ENCODE measurements at regions of chr15 and their contacts with region 1.

Region 1: DNA sequence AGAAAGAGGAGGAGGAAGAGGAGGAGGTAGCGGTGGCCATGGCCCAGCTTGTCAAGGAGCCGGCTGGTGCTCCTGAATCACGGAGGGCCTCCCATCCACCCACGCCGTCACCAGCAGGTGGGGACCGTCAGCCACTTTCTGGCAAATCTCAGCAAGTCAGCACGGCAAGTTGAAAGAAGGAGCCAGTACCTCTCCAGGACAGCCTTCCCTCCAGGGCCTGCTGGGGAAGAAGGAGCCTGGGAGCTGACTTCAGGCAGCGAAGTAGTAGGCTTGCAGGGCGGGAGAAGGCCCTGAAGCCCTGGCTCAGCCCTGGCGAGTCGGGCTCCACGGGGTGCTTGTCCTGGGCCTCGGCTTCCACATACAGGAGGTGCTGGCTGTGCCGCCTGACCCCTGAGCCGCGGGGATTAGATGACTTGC is 99.2 kb upstream of the TRPM1 start:
- DNase-seq: peak; percentile 61 to 87
- ATAC-seq: peak; percentile 91

Region 2: DNA sequence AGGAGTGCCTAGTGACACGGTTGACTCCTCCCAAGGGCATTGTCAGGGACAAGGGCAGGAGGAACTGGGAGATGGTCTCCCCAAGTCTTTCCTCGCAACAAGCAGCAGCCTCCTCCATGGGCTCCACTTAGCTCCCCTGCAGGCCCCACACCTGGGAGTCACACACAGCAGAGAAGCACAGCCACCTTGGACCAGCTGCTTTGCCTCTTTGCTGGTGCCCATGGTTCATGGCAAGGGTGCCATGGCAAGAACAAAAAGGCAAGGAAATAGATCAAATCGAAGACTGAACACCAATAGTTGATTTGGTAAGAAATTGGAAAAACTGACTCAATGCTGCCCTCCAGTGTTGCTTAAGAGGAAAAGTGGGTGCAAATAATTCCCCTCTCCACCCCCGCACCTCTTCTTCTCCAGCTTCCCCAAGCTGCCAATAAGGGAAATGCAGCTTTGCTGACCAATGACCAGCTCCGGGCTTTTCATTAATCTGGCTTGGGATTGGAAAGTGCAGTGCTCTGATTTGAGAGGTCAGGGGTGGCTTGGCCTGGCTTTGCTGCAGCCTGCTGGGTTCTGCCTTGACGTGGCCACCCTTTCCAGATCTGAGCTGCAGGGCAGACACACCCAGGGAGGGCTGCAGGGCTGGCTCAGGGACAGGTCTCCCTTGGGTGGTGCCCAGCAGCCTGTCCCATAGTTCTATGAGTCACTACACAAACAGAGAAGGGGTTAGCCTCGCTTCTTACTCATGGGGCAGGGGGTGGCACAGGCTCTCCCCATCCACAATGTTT is 287.9 kb after region 1 on chr15:
- intact Hi-C with region 1: loop called (anchors 5 to 10 kb)
- DNase-seq: peak; percentile 65 to 68
- ATAC-seq: peak; percentile 90

Measured in left colon (tissue), 2 donors.